ENCODE measurements at regions of chr19 and their contacts with region 1.

Region 1: DNA sequence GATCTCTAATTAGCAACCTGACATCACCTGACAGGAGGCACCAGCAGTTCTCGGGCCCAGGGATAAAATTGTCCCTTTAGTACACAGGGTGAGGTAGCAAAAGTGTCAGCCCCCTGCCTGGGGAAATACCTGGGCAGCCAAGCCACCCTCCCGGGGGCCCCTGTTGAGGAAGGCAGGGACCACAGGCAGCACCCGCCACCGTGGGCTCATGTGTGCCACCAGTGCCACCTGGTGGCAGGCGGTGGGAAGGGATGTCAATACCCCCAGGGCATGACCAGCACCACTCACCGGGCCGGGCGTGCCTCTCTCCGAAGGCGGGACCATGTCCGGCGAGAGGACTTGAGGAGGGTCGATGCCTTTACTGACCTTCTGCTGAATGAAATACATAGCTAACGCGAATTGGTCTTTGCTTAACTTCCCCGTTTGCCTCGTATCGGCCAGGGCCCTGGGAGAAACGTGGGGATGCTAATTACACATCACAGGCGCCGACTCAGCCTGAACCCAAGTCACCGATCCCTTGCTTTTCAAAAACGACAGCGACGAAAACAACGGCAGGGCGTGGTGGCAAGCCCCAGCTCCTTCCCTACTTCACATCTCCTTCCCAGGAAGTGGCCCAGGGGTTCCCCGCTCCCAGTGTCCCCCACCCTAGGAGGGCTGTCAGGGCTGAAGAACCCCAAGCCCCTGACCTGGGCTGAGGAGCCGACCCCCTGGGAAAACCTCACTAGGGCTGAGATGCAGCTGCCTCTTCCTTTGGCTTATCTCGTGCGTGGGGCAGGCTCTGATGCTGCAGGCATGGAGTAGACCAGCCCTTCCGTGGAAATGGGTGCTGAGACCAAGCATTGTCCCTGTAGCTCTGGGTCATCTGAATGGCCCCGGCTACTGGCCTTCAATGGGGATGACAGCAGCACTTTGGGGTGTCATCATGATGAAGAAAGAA is 53.8 kb downstream of the EPS15L1 start:
- DNase-seq: peak; percentile 70
- H3K4me3 ChIP-seq: no peak overlapping the region
- H3K27ac ChIP-seq: no peak overlapping the region
- H3K4me1 ChIP-seq: no peaks in the 10 kb centered on the region
- H3K27me3 ChIP-seq: no peaks in the 10 kb centered on the region
- CTCF ChIP-seq: peak; percentile 88

Region 2: DNA sequence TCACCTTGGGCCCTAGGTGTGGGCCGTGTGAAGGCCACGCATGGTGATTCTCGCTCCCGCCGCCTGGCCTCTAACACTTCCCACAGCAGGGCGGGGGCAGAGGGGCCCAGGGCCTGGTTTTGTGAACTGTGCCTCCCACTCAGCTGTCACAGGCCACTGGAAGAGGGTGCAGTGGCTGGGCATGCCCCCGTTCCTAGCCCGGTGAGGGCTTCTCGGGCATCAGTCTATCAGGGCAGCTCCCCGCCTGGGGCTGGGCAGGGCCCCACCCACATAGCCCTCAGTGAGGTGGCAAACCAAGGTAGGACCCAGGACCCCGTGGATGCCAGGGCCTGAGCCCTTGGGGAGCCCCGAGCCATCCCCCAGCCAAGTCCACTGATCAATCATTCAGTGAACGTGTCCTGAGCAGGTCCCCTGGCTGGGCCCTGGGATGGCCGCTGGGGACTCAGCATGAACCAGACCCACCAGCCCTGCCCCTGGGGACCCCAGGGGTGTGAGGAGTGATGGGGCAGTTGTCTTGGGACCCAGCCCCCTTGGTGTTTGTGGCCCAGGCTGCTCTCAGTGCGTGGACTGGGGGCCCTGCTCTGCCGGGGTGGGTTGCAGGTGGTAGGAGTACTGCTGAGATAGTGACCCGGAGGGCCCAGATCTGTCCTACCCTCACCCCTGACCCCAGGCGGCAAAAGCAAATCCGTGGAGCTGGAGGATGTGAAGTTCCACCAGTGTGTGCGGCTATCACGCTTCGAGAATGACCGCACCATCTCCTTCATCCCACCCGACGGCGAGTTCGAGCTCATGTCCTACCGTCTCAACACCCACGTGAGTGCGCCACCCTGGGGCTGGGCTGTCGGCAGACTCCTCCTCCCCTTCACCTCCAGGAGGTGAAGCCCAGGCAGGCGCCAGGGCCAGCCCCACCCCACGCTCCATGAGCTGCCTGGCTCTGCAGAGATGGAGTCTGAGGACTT is 190.8 kb before region 1 on chr19:
- CTCF ChIA-PET with region 1: no interaction called
- POLR2A ChIA-PET with region 1: no interaction called
- intact Hi-C with region 1: no loop called
- DNase-seq: no peak
- H3K4me3 ChIP-seq: no peak overlapping the region
- H3K27ac ChIP-seq: no peak overlapping the region
- H3K4me1 ChIP-seq: no peaks in the 10 kb centered on the region
- H3K27me3 ChIP-seq: no peaks in the 10 kb centered on the region
- CTCF ChIP-seq: no peak

Region 3: DNA sequence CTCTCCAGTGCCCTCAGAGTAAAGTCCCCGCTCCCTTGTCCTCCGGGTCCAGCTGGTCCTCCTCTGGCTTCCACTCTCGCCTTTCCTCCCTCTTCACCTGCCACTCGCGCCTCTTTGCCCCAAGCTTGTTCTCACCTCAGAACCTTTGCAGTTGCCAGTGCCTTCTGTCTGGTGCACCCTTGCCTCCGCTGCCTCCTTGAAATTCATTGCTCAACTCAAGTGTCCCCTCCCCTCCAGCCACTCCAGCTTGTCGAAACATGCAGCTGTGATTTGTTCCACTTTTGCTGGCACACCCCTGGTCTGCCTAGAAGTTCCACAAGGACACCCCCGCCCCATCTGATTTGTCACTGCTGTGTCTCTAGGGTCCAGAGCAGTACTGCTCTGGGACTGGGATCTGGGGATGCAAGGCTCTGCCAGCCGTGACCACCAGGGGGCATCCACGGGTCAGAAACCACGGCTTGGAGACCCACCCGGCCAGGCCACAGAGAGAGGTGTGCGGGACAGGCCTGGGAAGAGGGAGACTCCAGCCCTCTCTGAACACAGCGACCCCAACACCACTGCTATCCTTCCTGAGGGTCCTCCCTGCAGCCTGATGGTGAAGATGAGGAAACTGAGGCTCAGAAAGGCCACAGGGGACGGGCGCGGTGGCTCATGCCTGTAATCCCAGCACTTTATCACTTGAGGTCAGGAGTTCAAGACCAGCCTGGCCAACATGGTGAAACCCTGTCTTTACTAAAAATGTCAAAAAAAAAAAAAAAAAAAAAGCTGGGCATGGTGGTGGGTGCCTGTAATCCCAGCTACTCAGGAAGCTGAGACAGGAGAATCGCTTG is 170.4 kb before region 1 on chr19:
- CTCF ChIA-PET with region 1: no interaction called
- POLR2A ChIA-PET with region 1: no interaction called
- intact Hi-C with region 1: loop called (anchors 1 kb)
- DNase-seq: peak; percentile 84
- H3K4me3 ChIP-seq: no peak overlapping the region
- H3K27ac ChIP-seq: no peak overlapping the region
- H3K4me1 ChIP-seq: no peaks in the 10 kb centered on the region
- H3K27me3 ChIP-seq: no peaks in the 10 kb centered on the region
- CTCF ChIP-seq: peak; percentile 97

Region 4: GRCh38 chr19:16435238-16435917 is 17.4 kb after region 1 on chr19:
- CTCF ChIA-PET with region 1: no interaction called
- POLR2A ChIA-PET with region 1: no interaction called
- intact Hi-C with region 1: no loop called
- DNase-seq: no peak
- H3K4me3 ChIP-seq: no peak overlapping the region
- H3K27ac ChIP-seq: no peak overlapping the region
- H3K4me1 ChIP-seq: no peaks in the 10 kb centered on the region
- H3K27me3 ChIP-seq: no peaks in the 10 kb centered on the region
- CTCF ChIP-seq: no peak